SK-N-SH (cell line): ENCODE measurements at regions of chr12 and their contacts with region 1.

Region 1: DNA sequence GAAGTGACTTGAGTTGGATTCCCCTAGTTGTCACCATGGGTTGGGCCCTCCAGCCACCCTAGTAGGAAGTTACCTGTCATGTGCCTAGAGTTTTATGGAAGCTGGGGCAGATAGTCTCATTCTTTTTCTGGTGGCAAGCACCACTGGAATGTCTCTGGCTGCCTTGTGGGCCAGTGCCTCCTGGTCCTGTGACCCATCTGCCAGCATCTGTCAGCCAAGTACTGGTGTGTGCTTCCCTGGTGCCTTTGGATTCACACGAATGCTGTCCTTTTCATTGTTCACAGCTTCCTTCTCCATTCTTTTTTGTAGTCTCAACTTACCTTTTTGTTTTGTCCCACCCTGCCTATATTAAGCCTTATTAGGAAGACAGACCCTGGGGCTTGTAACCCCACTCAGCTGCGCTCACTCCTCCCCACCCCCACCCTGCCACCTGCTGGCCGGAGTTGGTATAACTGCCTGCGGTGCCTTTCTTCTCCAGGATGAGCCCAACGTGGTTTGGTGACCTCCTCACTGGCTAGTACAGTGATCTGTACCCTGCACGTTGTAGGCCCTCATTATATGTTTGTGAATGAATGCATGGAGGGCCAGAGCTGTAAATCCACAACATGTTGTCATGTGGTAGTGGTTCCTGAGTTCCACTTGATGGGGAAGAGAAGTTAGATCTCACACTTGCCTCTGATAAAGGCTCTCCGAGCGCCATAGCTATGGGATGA is 125.7 kb downstream of the TSPAN9 start:
- DNase-seq: peak; percentile 83
- H3K4me3 ChIP-seq: no peak overlapping the region; a peak in 1 of 4 replicates
- H3K27ac ChIP-seq: no peak overlapping the region
- H3K4me1 ChIP-seq: peaks cover 6 to 55% of the 10 kb centered on the region in 2 experiments; a peak in 3 of 4 replicates
- H3K27me3 ChIP-seq: no peaks in the 10 kb centered on the region
- CTCF ChIP-seq: peak; percentile 98
- EP300 ChIP-seq: no peak
- RAD21 ChIP-seq: peak; percentile 58

Region 2: GRCh38 chr12:3135522-3136461 is 67.1 kb before region 1 on chr12:
- CTCF ChIA-PET with region 1: interaction called, 99 read pairs
- POLR2A ChIA-PET with region 1: no interaction called
- DNase-seq: peak; percentile 90
- H3K4me3 ChIP-seq: no peak overlapping the region; a peak in 1 of 4 replicates
- H3K27ac ChIP-seq: no peak overlapping the region
- H3K4me1 ChIP-seq: peaks cover 13 to 22% of the 10 kb centered on the region in 2 experiments; a peak in 3 of 4 replicates
- H3K27me3 ChIP-seq: no peaks in the 10 kb centered on the region
- CTCF ChIP-seq: peak; percentile 78
- EP300 ChIP-seq: no peak
- RAD21 ChIP-seq: peak; percentile 96

Region 3: GRCh38 chr12:3150931-3151835 is 51.7 kb before region 1 on chr12:
- CTCF ChIA-PET with region 1: interaction called, 24 read pairs
- POLR2A ChIA-PET with region 1: no interaction called
- DNase-seq: peak; percentile 22
- H3K4me3 ChIP-seq: no peak overlapping the region
- H3K27ac ChIP-seq: no peak overlapping the region
- H3K4me1 ChIP-seq: peaks cover 7 to 32% of the 10 kb centered on the region in 2 experiments; a peak in 3 of 4 replicates
- H3K27me3 ChIP-seq: no peaks in the 10 kb centered on the region
- CTCF ChIP-seq: no peak
- EP300 ChIP-seq: no peak
- RAD21 ChIP-seq: no peak

Region 4: DNA sequence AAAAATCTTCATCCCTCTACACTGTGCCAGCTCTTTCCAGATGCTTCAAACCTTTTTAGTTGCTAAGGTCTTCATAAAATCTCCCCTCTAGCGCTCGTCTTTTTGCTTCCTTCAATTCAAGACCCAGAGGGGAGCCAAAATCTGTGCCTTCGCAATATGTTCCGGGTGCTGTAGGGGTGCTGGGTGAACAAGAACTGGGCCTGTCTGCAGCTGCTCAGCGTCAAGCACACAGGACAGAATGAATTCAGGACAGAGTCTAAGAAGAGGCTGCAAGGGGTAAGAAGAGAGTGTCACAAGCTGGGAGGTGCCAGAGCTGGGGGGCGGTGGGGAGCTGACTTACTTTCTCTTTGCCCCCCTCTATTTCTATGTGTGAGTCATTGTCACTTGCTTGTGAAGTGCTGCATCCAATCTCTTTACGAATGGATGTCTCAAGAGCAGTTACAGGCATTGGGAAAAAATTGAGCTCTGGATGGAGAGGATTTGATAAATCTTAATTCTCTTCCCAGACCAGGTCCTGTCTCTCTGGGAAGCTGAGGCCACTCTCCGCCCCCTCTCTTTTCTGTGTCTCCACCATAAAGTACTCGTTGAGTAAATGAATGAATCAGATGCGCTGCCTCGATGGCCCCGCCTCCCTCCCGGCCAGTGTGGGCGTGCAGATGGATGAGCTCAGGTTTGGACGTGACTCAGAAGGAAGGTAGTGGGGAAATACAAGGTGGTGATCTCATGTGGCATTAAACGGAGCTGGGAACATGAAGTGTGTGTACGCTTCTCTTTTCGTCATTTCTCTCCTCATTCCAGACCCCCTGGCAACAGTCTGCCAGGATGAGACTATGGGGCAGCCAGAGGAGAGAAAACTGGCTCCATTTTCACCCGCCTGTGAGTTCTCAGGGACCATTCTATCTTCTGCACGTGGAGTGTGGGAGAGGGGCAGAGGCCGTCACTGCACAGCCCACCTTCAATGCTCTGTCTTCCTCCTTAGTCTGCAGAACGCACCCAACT is 34.4 kb before region 1 on chr12:
- CTCF ChIA-PET with region 1: interaction called, 23 read pairs
- POLR2A ChIA-PET with region 1: interaction called, 3 read pairs
- DNase-seq: no peak
- H3K4me3 ChIP-seq: no peak overlapping the region
- H3K27ac ChIP-seq: peak overlapping the region in 1 of 2 experiments; percentile 95; a peak in 2 of 4 replicates
- H3K4me1 ChIP-seq: peaks cover 49 to 56% of the 10 kb centered on the region in 2 experiments
- H3K27me3 ChIP-seq: no peaks in the 10 kb centered on the region
- CTCF ChIP-seq: no peak
- EP300 ChIP-seq: peak in 1 of 2 experiments; percentile 39; a peak in 1 of 4 replicates
- RAD21 ChIP-seq: no peak

Region 5: DNA sequence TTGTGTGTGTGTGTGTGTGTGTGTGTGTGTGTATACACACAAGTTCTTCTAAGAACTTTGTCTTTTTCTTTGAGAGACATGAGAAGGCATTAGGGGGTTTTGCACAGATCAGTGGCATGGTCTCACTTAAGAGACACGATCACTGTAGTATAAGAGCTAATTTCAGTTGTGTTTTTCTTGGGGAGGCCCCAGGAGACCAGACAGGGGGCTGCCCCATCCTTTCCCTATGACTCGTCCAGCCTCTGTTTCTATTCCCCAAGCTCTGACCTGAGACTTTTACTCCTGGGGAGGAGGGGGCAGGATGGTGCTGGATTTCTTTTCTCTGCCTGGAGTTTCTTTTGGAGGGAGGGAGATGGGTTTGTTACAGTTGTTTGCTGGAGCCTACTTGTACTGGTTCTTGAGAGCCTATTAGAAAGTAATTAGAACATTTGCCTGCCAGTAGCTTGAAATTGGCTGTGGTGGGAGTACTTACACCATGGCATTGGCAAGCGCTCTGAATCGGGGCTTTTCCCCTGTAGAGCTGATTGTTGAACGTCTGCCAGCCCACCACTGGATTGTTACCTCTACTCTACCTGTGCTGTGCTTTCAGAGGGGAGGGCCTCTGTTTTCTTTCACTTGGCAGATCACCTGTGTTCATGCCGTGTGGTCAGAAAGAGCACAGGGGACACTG is 16.2 kb before region 1 on chr12:
- CTCF ChIA-PET with region 1: interaction called, 27 read pairs
- POLR2A ChIA-PET with region 1: no interaction called
- DNase-seq: no peak
- H3K4me3 ChIP-seq: no peak overlapping the region
- H3K27ac ChIP-seq: no peak overlapping the region
- H3K4me1 ChIP-seq: peaks cover 15 to 21% of the 10 kb centered on the region in 2 experiments; a peak in 3 of 4 replicates
- H3K27me3 ChIP-seq: no peaks in the 10 kb centered on the region
- CTCF ChIP-seq: no peak
- EP300 ChIP-seq: no peak
- RAD21 ChIP-seq: no peak

Region 6: DNA sequence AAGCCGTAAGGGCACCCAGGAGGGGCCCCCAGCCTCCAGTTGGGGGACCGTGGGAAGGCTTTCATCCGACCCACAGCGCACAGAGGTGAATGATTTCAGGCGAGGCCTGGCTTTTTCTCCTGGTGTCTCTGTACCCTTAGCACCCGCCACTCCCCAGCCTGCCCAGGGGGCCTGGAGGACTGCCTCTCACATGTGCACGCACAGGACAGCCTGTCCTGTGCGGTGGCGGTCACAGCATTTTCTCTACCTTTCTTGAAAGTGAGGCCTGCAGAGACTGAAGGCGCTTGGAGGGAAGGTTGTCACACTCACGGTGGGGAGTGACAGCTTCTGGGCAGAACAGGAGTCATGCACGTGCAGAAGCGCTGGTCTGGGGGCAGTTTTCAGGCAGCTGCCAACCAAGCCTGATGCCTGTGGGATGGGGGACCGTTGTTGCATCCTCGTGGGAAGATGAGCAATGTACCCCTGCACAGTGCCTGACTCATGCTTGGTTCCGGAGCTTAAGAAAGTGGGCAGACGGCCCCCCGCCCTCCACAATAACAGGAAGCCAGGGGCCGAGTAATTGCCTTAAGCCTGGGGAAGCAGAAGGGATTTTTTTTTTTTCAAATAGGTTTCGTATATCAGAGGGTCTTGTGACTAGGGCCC is 22.4 kb after region 1 on chr12:
- CTCF ChIA-PET with region 1: interaction called, 56 read pairs
- POLR2A ChIA-PET with region 1: no interaction called
- DNase-seq: no peak
- H3K4me3 ChIP-seq: no peak overlapping the region
- H3K27ac ChIP-seq: peak overlapping the region in 1 of 2 experiments; percentile 91; a peak in 2 of 4 replicates
- H3K4me1 ChIP-seq: peaks cover 23 to 40% of the 10 kb centered on the region in 2 experiments; a peak in 3 of 4 replicates
- H3K27me3 ChIP-seq: no peaks in the 10 kb centered on the region
- CTCF ChIP-seq: no peak
- EP300 ChIP-seq: no peak
- RAD21 ChIP-seq: no peak

Region 7: DNA sequence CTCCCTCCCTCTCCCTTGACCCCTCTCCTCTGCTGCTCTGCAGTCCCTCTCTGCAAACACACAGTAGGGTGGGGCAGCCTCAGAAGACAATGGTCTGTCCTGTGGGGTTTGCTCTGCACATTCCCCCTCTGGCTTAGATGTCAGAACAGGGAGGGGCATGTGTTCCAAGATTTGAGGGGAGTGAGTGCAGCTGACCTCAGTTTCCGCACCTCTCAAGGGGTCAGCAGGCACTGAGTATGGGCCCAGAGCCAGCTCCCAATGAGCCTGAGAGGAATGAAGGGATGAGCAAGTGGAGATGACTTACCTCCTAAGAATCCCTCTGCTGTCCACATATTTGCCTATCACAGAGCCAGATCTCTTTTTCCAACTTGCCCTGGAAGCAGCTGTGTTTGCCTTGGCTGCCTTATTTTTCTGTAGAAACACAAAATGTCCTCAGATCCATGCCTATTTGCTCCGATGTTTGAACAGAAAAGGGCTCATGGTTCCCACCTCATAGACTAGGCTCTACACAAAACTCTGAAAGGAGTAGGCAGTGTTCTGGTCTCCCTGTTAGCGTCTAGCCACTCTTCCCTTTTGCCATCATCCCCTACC is 438.6 kb after region 1 on chr12:
- CTCF ChIA-PET with region 1: no interaction called
- POLR2A ChIA-PET with region 1: no interaction called
- DNase-seq: peak; percentile 47
- H3K4me3 ChIP-seq: no peak overlapping the region
- H3K27ac ChIP-seq: peak overlapping the region; percentile 7 to 70; a peak in 3 of 4 replicates
- H3K4me1 ChIP-seq: peaks cover 8 to 11% of the 10 kb centered on the region in 2 experiments; a peak in 2 of 4 replicates
- H3K27me3 ChIP-seq: no peaks in the 10 kb centered on the region
- CTCF ChIP-seq: no peak
- EP300 ChIP-seq: peak in 1 of 2 experiments; percentile 90; a peak in 2 of 4 replicates
- RAD21 ChIP-seq: no peak